Mammary epithelial cell (primary cell): ENCODE measurements at regions of chr1 and their contacts with region 1.

Region 1: DNA sequence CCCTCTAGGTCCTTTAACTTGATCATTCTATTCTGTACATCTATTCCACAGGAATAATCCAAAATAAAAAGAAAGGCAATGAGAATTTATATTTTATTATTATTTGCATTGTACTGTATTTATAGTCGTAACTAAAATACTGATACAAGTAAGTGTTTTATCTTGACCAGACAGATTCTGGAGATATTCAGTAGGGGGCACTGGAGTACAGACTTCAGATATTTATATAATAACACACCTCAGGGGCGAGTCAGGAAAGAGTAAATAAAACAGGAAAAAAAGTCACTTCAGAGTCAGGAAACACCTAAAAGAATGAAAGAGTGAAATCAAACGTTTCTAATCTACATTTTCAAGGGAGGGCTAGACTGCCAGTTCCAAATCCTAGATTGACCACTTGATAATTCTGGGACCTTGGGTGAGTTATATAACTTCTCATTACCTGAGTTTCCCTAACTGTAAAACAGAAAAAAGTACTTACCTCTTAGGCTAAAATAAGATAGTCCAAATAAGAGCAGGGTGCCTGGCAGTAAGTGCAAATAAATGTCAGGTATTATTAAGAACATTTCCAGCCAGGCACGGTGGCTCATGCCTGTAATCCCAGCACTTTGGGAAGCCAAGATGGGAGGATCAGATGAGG is 31.1 kb upstream of the MTF1 start:
- DNase-seq: peak; percentile 26
- H3K4me3 ChIP-seq: no peak overlapping the region
- H3K27ac ChIP-seq: no peak overlapping the region
- H3K4me1 ChIP-seq: no peaks in the 10 kb centered on the region
- H3K27me3 ChIP-seq: no peaks in the 10 kb centered on the region
- CTCF ChIP-seq: peak; percentile 50 to 57

Region 2: DNA sequence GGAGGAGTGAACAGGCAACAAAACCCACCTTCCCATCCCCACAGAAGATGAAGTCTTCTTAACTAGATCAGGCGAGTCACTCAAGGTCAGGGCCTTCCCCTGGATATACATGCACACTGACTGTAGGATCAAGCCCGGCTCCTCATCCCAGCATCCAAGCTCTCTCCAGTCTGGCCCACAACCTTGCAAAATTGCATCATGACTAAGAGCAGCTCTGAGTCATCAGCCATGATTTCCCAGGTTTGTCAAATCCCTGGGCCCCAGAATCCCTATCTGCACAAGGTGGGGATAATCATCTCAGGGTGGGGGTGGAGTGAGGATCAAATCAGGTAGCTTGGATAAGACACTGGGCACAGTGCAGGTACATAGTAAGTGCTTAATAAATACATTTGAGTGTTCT is 656.9 kb before region 1 on chr1:
- CTCF ChIA-PET with region 1: no interaction called
- dilution Hi-C with region 1: no loop called
- in situ Hi-C with region 1: no loop called
- intact Hi-C with region 1: no loop called
- DNase-seq: peak; percentile 14
- H3K4me3 ChIP-seq: no peak overlapping the region
- H3K27ac ChIP-seq: no peak overlapping the region
- H3K4me1 ChIP-seq: no peaks in the 10 kb centered on the region
- H3K27me3 ChIP-seq: no peaks in the 10 kb centered on the region
- CTCF ChIP-seq: no peak

Region 3: DNA sequence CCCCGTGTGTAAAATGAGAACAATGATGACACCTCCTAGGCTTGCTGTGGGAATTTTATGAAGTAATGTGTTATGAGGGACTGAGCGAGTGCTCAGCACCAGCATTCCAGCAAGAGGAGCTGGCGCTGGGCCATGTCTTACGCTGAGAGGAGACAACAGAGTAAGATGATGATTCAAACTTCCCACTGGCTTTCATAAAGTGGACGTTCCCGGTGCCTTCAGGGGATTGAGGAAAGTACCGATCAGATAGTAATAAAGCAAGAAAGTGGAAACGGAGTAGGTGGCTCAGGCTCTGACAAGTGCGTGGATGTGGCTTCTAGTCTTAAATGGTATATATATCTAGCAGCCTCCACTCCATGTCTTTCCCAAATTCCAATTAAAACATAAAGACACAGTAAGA is 149.4 kb before region 1 on chr1:
- CTCF ChIA-PET with region 1: no interaction called
- dilution Hi-C with region 1: no loop called
- in situ Hi-C with region 1: no loop called
- intact Hi-C with region 1: no loop called
- DNase-seq: peak; percentile 94
- H3K4me3 ChIP-seq: no peak overlapping the region
- H3K27ac ChIP-seq: no peak overlapping the region
- H3K4me1 ChIP-seq: peaks cover 11% of the 10 kb centered on the region
- H3K27me3 ChIP-seq: no peaks in the 10 kb centered on the region
- CTCF ChIP-seq: no peak

Region 4: DNA sequence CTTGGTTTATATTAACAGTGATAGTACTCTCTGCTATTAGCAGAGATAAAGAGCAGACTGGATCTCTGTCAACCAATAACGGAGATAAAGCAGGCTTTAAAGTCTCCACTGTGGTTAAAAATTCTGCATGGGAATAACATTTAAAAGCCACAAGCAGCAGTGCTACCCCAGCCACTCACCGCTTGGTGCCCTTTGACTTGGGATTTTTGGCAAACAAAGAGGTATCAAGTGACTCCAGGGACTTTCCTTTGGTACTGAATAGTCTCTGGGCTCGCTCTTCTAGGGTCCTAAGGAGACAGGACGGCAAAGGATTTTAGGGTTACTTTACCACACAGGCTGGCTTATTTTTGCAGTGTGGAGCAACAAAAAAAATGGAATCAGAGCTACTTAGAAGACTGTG is 88.0 kb after region 1 on chr1:
- CTCF ChIA-PET with region 1: no interaction called
- dilution Hi-C with region 1: no loop called
- in situ Hi-C with region 1: loop called (anchors 5 to 10 kb)
- intact Hi-C with region 1: loop called (anchors 1 kb)
- DNase-seq: no peak
- H3K4me3 ChIP-seq: no peak overlapping the region
- H3K27ac ChIP-seq: no peak overlapping the region
- H3K4me1 ChIP-seq: no peaks in the 10 kb centered on the region
- H3K27me3 ChIP-seq: no peaks in the 10 kb centered on the region
- CTCF ChIP-seq: no peak

Region 5: GRCh38 chr1:38018864-38019343 is 128.4 kb after region 1 on chr1:
- CTCF ChIA-PET with region 1: no interaction called
- dilution Hi-C with region 1: no loop called
- in situ Hi-C with region 1: no loop called
- intact Hi-C with region 1: loop called (anchors 1 kb)
- DNase-seq: no peak
- H3K4me3 ChIP-seq: no peak overlapping the region
- H3K27ac ChIP-seq: no peak overlapping the region
- H3K4me1 ChIP-seq: peaks cover 6% of the 10 kb centered on the region
- H3K27me3 ChIP-seq: no peaks in the 10 kb centered on the region
- CTCF ChIP-seq: peak; percentile 61 to 65

Region 6: DNA sequence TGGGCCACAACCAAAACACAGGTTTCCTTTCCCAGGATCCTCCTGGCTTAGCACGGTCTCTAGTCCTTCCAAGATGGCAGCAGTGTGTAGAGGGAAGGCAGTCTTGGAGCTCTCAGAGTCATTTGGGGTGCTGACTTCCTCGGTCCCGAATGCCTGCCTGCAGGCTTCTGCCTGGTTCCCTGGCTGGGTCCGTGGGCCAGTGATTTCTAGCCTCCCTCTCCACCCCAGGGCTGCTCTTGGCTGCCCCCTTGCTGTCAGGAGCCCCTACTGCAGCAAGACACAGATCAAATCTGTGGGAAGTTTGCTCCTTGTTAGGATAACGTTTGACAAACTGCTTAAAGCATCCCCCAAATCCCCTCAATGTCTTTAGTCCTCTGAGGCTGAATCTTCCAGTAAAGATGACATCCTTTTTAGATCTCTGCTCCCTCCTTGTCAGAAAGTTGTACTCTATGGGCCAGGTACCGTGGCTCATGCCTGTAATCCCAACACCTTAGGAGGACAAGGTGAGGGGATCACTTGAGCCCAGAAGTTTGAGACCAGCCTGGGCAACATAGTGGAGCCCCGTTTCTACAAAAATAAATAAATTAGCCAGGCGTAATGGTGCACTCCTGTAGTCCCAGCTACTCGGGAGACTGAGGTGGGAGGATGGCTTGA is 696.6 kb after region 1 on chr1:
- CTCF ChIA-PET with region 1: interaction called, 16 read pairs
- dilution Hi-C with region 1: no loop called
- in situ Hi-C with region 1: no loop called
- intact Hi-C with region 1: no loop called
- DNase-seq: peak; percentile 15
- H3K4me3 ChIP-seq: no peak overlapping the region
- H3K27ac ChIP-seq: no peak overlapping the region
- H3K4me1 ChIP-seq: no peaks in the 10 kb centered on the region
- H3K27me3 ChIP-seq: no peaks in the 10 kb centered on the region
- CTCF ChIP-seq: peak; percentile 92 to 94

Region 7: GRCh38 chr1:38834937-38835827 is 944.7 kb after region 1 on chr1:
- CTCF ChIA-PET with region 1: no interaction called
- dilution Hi-C with region 1: no loop called
- in situ Hi-C with region 1: no loop called
- intact Hi-C with region 1: loop called (anchors 2 kb)
- DNase-seq: peak; percentile 75
- H3K4me3 ChIP-seq: no peak overlapping the region
- H3K27ac ChIP-seq: no peak overlapping the region
- H3K4me1 ChIP-seq: peaks cover 4% of the 10 kb centered on the region
- H3K27me3 ChIP-seq: no peaks in the 10 kb centered on the region
- CTCF ChIP-seq: peak; percentile 74 to 75